Dorsolateral prefrontal cortex (tissue), 120 donors: ENCODE measurements at regions of chrX and their contacts with region 1.

Region 1: DNA sequence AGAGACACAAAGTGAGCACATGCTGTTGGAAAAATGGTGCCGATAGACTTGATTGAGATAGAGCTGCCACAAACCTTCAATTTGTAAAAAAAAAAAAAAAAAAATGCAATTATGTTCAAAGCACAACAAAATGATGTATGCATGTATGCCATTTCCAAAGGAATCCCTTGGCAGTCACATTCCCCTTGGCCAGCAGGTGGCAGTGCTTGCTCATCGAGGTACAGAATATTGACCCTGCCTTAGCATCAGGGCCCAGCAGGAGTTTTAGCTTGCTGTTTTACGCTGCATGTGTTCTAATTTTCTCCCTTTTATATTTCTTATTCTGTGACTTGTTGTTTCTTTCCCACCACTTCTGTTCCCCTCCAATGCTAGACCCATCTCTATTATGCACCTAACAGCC is 34.5 kb upstream of the CYBB start:
- DNase-seq: peak; percentile 59 to 84 (median 70)
- H3K4me3 ChIP-seq: no peak overlapping the region
- H3K27ac ChIP-seq: no peak overlapping the region
- H3K27me3 ChIP-seq: peaks cover 0 to 48% (median 3%) of the 10 kb centered on the region in 45 donors
- CTCF ChIP-seq: peak; percentile 44 to 88 (median 80)

Region 2: DNA sequence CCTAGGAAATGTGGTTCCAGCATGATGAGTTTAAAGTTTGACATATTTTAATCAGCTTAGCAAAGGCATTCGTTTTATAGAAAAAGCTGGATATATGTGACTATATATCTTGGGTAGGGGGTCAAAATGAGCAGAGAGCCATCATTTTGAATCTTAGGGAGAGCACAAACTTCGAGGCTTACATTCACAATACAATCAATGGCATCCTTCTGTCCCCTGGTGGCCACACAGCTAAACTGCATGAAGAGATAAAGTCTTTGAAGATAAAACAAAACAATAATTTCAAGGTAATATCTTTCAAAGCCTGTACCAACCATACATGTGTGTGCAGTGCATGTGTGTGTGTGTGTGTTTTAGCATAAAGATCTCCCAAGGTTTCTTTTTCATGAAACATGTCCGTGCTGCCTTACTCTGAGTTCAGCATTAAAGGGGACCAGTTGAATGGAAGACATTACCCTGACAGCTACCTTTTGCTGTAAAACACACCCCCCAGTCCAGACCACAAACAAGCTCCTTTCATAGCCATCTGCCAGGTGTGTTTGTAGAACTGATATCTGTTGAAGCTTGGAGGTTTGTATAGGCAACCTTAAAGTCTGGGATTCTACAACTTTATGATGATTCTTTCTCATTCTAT is 80.0 kb after region 1 on chrX:
- intact Hi-C with region 1: loop called (anchors 5 kb)
- DNase-seq: peak in 6 of 10 donors; percentile 8 to 70 (median 36)
- H3K4me3 ChIP-seq: no peak overlapping the region
- H3K27ac ChIP-seq: no peak overlapping the region
- H3K27me3 ChIP-seq: peaks cover 0 to 71% (median 11%) of the 10 kb centered on the region in 45 donors
- CTCF ChIP-seq: peak; percentile 52 to 91 (median 80)

Region 3: DNA sequence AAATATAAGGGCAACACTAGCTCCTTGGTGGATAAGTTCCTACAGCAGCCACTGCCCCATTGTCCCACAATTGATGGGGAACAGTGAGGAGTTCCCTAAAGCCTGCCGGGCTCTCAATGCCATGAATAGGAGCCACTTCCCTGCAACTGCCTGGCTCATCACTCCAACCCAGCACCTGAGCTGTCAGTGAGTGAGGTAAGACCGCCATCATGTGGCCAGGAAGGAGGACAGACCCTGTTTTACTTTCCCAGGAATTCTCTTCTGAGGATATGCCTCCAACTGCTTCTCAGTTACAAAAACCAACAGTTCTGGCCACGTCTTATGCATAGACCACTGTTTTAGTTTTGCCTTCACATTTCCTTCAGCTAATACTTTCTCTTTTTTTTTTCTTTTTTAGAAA is 429.8 kb after region 1 on chrX:
- intact Hi-C with region 1: loop called in 1 of 2 experiments (anchors 10 kb)
- DNase-seq: peak in 4 of 10 donors; percentile 7 to 43 (median 20)
- H3K4me3 ChIP-seq: no peak overlapping the region
- H3K27ac ChIP-seq: no peak overlapping the region
- H3K27me3 ChIP-seq: peaks cover 0 to 85% (median 26%) of the 10 kb centered on the region in 45 donors
- CTCF ChIP-seq: peak in 39 of 56 donors; percentile 12 to 63 (median 31)